Naive thymus-derived CD4-positive, alpha-beta T cell (primary cell): ENCODE measurements at regions of chr5 and their contacts with region 1.

Region 1: GRCh38 chr5:134225618-134226440 is at the start of gene PPP2CA:
- DNase-seq: peak; percentile 98 to 100 (median 99)
- ATAC-seq: peak; percentile 89
- H3K4me3 ChIP-seq: peak within 1 kb of the TSS; percentile 100
- H3K4me3 Mint-ChIP-seq: peak within 1 kb of the TSS; percentile 66 to 98 (median 96)
- H3K27ac ChIP-seq: peak within 1 kb of the TSS; percentile 100
- H3K27ac Mint-ChIP-seq: peak within 1 kb of the TSS; percentile 95 to 100 (median 98)
- H3K4me1 ChIP-seq: peaks cover 29 to 40% of the 10 kb centered on the region in 2 donors
- H3K4me1 Mint-ChIP-seq: peaks cover 37 to 58% (median 52%) of the 10 kb centered on the region in 7 donors
- H3K27me3 ChIP-seq: no peaks in the 10 kb centered on the region
- H3K27me3 Mint-ChIP-seq: peaks cover 0 to 4% (median 0%) of the 10 kb centered on the region in 5 donors
- total RNA-seq, gene PPP2CA: 89.5 to 168 (median 132) TPM

Region 2: GRCh38 chr5:134004592-134005375 is 221.0 kb before region 1 on chr5 and contains the start of gene VDAC1:
- CTCF ChIA-PET with region 1: no interaction called
- POLR2A ChIA-PET with region 1: interaction called, 5 read pairs
- intact Hi-C with region 1: loop called (anchors 1 kb)
- DNase-seq: peak; percentile 74 to 92 (median 89)
- ATAC-seq: peak; percentile 85
- H3K4me3 ChIP-seq: peak within 1 kb of the TSS; percentile 83
- H3K4me3 Mint-ChIP-seq: peak within 1 kb of the TSS; percentile 89 to 97 (median 92)
- H3K27ac ChIP-seq: peak within 1 kb of the TSS; percentile 98
- H3K27ac Mint-ChIP-seq: peak within 1 kb of the TSS; percentile 86 to 97 (median 96)
- H3K4me1 ChIP-seq: peaks cover 17 to 26% of the 10 kb centered on the region in 2 donors
- H3K4me1 Mint-ChIP-seq: peaks cover 25 to 47% (median 43%) of the 10 kb centered on the region in 7 donors
- H3K27me3 ChIP-seq: no peaks in the 10 kb centered on the region
- H3K27me3 Mint-ChIP-seq: no peaks in the 10 kb centered on the region
- total RNA-seq, gene VDAC1: 37.8 to 259 (median 43.7) TPM

Region 3: DNA sequence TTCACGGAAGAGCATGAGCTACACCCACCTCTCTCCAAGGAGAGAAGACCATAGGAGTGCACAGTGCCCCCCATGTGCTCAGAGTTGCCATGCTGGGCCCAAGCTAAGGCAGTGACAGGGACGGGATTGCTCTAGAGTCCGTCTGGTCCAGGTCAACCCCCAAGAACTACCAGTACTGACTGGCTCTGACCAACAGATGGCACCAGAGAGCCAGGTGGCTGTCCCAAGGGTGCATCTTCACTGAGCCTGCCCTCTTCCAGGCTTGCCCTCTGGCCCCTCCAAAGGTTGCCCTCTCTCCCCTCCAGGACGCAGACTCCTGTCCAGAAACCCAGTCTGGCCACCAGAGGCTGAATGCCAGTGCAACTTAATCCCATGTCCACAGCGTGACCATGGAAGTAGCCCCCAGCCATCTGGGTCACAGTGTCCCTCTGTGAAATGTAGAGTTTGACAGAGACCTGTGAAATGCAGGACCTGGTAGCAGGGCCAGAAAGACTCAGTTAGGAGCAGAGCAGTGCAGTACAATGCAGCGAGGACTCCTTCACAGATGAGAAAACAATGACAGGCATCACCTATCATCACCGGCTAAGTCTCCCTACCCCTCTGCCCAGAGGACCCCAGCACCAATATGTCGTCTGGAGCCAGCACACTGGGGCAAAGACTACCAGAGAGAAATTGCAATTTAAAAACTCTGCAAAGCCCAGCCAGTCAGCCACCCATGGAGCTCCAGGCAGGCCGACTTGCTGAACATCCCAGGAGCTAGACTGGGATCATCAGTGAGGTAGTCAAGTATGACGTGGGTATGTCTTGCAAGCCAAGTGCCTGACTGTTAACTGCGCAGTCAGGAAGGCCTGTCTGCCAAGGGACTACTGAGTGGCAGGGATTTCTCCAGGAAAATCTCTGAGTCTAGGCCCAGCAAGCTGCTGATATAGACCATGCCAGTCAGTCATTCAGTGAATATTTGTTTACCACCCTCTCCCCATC is 41.4 kb before region 1 on chr5:
- CTCF ChIA-PET with region 1: interaction called, 3 read pairs
- POLR2A ChIA-PET with region 1: interaction called, 55 read pairs
- intact Hi-C with region 1: loop called (anchors 2 kb)
- DNase-seq: peak; percentile 52 to 83 (median 65)
- ATAC-seq: peak; percentile 94
- H3K4me3 ChIP-seq: no peak overlapping the region
- H3K4me3 Mint-ChIP-seq: no peak overlapping the region
- H3K27ac ChIP-seq: no peak overlapping the region
- H3K27ac Mint-ChIP-seq: peak overlapping the region in 1 of 9 donors; percentile 16
- H3K4me1 ChIP-seq: no peaks in the 10 kb centered on the region
- H3K4me1 Mint-ChIP-seq: peaks cover 0 to 5% (median 0%) of the 10 kb centered on the region in 7 donors
- H3K27me3 ChIP-seq: no peaks in the 10 kb centered on the region
- H3K27me3 Mint-ChIP-seq: peaks cover 0 to 4% (median 0%) of the 10 kb centered on the region in 5 donors

Region 4: DNA sequence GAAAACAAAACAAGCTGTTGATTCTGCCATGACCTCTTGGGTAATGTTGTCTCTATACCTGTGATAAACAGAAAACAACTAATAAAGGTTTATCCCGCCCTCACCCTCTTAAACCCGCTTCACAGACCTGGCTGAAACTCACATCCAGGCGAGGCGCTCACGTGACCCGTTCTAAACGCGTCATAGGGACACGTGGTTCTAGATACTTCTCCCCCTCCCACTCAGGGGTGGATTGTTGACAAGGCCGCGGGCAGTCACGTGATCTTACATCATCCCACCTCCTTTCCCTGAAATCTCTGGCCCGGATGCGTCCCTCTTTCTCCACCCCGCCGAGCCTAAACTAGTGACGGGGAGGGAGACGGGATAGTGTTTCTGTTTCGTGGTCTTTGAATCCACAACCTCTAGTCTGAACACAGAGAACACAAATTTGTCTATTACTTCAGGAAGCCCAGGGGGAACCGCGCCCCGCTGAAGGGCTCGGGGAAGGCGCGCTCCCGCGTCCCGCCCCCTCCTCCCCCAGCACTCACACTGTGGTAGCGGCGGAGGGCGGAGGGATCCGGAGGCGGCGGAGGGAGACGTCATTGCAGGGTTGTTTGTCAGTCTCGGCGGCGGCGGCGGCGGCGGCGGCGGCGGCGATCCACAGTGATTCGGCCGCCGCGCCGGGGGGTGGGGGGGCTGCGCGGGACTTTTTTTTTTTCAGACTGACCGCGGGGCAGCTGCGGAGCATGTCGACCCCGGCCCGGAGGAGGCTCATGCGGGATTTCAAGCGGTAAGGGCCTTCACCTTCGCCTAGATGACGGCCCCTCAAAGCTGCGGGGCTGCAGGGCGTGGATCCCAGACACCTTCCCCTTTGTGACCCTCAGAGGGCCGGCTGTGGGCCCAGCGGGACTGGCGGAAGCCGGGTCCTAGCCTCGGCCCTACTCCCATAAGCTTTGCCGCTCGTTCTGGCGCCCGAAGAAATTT is 145.3 kb after region 1 on chr5 and contains the start of gene UBE2B:
- CTCF ChIA-PET with region 1: no interaction called
- POLR2A ChIA-PET with region 1: interaction called, 14 read pairs
- intact Hi-C with region 1: loop called (anchors 1 kb)
- DNase-seq: peak; percentile 96 to 99 (median 98)
- ATAC-seq: peak; percentile 86
- H3K4me3 ChIP-seq: peak within 1 kb of the TSS; percentile 94
- H3K4me3 Mint-ChIP-seq: peak within 1 kb of the TSS; percentile 82 to 99 (median 96)
- H3K27ac ChIP-seq: peak within 1 kb of the TSS; percentile 100
- H3K27ac Mint-ChIP-seq: peak within 1 kb of the TSS; percentile 97 to 100 (median 100)
- H3K4me1 ChIP-seq: peaks cover 25 to 38% of the 10 kb centered on the region in 2 donors
- H3K4me1 Mint-ChIP-seq: peaks cover 30 to 76% (median 60%) of the 10 kb centered on the region in 7 donors
- H3K27me3 ChIP-seq: no peaks in the 10 kb centered on the region
- H3K27me3 Mint-ChIP-seq: peaks cover 0 to 8% (median 0%) of the 10 kb centered on the region in 5 donors
- total RNA-seq, gene UBE2B: 91.4 to 141 (median 124) TPM

Region 5: GRCh38 chr5:134637161-134637582 is 411.3 kb after region 1 on chr5:
- CTCF ChIA-PET with region 1: no interaction called
- POLR2A ChIA-PET with region 1: no interaction called
- intact Hi-C with region 1: loop called in 1 of 2 experiments (anchors 1 kb)
- DNase-seq: no peak
- ATAC-seq: no peak
- H3K4me3 ChIP-seq: no peak overlapping the region
- H3K4me3 Mint-ChIP-seq: no peak overlapping the region
- H3K27ac ChIP-seq: no peak overlapping the region
- H3K27ac Mint-ChIP-seq: no peak overlapping the region
- H3K4me1 ChIP-seq: no peaks in the 10 kb centered on the region
- H3K4me1 Mint-ChIP-seq: peaks cover 0 to 10% (median 4%) of the 10 kb centered on the region in 7 donors
- H3K27me3 ChIP-seq: no peaks in the 10 kb centered on the region
- H3K27me3 Mint-ChIP-seq: no peaks in the 10 kb centered on the region

Region 6: DNA sequence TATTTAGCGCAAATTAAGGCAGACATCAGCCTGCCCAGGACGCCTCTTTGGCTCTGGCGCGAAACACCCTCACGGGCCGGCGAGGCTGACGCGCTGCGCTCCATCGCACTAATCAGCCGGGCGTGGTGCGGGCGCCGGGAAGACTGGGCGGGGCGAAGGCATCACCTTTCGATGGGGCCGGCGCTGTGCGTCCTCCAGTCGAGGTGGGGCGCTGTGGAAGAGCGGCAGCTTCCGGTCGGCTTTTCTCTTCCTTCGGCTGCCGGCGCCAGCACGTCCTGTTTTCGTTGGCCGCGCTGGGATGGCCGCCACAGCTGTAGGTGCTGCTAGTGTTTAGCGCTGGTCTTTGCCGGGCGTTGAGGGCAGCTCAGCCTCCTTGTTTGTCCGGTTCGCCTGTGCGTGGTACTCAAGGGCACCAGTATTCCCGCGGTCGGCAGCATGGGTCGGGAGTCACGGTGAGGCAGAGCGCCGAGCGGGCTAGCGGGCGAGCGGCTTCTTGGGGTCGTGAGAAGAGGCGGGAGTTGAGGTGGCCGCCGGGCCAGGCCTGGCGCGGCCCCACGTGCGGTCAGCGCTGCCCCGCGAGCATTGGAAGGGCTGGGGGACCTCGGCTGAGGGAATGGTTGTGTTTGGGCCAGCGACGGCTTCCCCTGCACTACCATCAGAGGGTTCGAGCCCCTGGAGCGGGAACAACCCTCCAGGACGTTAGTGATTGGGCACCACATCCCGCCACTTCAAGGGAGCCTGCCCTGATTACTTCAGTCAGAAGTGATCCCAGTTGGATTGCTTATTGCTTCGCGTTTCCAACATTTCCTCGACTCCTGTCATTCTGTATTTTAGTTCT is 532.9 kb after region 1 on chr5 and contains the start of gene DDX46:
- CTCF ChIA-PET with region 1: no interaction called
- POLR2A ChIA-PET with region 1: no interaction called
- intact Hi-C with region 1: loop called in 1 of 2 experiments (anchors 1 kb)
- DNase-seq: peak; percentile 85 to 95 (median 91)
- ATAC-seq: peak; percentile 99
- H3K4me3 ChIP-seq: peak within 1 kb of the TSS; percentile 75
- H3K4me3 Mint-ChIP-seq: peak within 1 kb of the TSS; percentile 92 to 100 (median 99)
- H3K27ac ChIP-seq: peak within 1 kb of the TSS; percentile 87
- H3K27ac Mint-ChIP-seq: peak within 1 kb of the TSS; percentile 93 to 99 (median 97)
- H3K4me1 ChIP-seq: peaks cover 12 to 13% of the 10 kb centered on the region in 2 donors
- H3K4me1 Mint-ChIP-seq: peaks cover 20 to 47% (median 38%) of the 10 kb centered on the region in 7 donors
- H3K27me3 ChIP-seq: no peaks in the 10 kb centered on the region
- H3K27me3 Mint-ChIP-seq: no peaks in the 10 kb centered on the region
- total RNA-seq, gene DDX46: 51.2 to 72.5 (median 64.2) TPM

Region 7: GRCh38 chr5:135423146-135423845 is 1197.5 kb after region 1 on chr5:
- CTCF ChIA-PET with region 1: no interaction called
- POLR2A ChIA-PET with region 1: no interaction called
- intact Hi-C with region 1: no loop called
- DNase-seq: no peak
- ATAC-seq: peak; percentile 75
- H3K4me3 ChIP-seq: no peak overlapping the region
- H3K4me3 Mint-ChIP-seq: no peak overlapping the region
- H3K27ac ChIP-seq: no peak overlapping the region
- H3K27ac Mint-ChIP-seq: no peak overlapping the region
- H3K4me1 ChIP-seq: peaks cover 0 to 6% of the 10 kb centered on the region in 2 donors
- H3K4me1 Mint-ChIP-seq: peaks cover 0 to 28% (median 6%) of the 10 kb centered on the region in 7 donors
- H3K27me3 ChIP-seq: no peaks in the 10 kb centered on the region
- H3K27me3 Mint-ChIP-seq: peaks cover 20 to 44% (median 38%) of the 10 kb centered on the region in 5 donors